ENCODE measurements at regions of chr5 and their contacts with region 1.

Region 1: DNA sequence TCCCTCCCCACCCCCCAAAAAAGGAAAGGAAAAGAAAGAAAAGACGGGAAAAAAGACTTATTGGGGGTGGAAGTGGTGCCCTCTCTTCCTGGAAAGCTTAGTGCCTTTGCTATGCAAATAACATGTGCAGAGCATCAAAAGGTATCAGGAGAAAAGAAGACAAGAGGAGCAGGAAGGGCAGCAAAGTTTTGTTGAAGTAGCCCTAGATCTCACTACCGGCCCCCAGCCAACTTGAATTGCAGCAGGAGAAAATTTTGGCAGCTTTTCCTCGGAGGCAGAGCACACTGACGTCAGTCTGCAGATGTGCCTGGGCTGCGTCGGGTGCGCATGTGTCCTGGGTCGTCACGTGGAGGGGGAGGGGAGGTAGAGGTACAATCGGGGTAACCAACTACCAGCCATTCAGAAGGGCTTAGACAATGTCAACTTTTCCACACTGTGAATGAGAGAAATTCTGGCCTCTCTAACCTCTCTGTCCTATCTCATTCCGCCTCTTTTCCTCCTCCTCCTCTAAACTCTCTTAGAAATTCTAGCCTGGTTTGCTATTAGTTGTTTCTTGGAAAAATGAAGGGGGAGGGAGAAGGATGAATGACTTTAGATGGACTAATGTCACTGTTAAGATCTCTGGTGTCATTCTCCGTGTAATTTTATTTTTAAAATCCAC is at the start of gene ADAMTS6:
- DNase-seq: peak; percentile 84
- H3K4me3 Mint-ChIP-seq: no peak within 1 kb of the TSS
- H3K27ac Mint-ChIP-seq: peak within 1 kb of the TSS; percentile 50
- H3K4me1 Mint-ChIP-seq: peaks cover 8% of the 10 kb centered on the region
- H3K27me3 Mint-ChIP-seq: peaks cover 2% of the 10 kb centered on the region
- total RNA-seq, gene ADAMTS6: 0.44 to 0.45 TPM

Region 2: DNA sequence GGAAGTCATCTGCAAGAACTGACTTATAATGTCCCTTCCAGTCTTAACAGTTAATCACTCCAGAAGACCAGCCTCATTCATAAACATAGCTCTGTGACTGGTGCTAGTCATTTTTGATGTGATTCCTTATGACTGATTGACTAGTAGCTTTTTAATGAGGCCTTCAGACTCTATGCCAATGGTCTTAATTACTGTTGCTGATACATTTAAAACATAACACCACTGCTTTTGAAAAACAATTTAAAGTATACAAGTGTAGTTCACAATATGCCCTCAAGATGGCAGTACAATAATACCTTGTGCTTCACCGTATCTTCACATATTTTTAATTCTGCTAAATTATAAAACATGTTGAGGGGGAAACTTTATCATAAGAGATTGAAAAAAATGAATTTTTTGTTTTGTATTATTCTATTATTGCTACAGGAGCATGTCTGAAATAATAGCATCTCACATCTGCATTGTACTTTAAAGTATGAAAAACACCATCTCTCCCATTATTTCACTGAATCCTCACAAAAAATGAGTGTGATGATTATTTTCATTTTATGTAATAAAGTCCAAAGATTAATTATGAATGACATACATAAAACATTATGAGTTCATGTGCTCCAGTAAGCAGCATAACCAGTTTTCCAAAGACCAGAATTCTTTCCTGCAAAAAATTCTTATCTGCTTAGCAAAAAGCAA is 846.6 kb before region 1 on chr5:
- CTCF ChIA-PET with region 1: interaction called, 8 read pairs
- POLR2A ChIA-PET with region 1: no interaction called
- intact Hi-C with region 1: loop called (anchors 1 kb)
- DNase-seq: no peak
- H3K4me3 Mint-ChIP-seq: no peak overlapping the region
- H3K27ac Mint-ChIP-seq: no peak overlapping the region
- H3K4me1 Mint-ChIP-seq: no peaks in the 10 kb centered on the region
- H3K27me3 Mint-ChIP-seq: peaks cover 16% of the 10 kb centered on the region

Region 3: DNA sequence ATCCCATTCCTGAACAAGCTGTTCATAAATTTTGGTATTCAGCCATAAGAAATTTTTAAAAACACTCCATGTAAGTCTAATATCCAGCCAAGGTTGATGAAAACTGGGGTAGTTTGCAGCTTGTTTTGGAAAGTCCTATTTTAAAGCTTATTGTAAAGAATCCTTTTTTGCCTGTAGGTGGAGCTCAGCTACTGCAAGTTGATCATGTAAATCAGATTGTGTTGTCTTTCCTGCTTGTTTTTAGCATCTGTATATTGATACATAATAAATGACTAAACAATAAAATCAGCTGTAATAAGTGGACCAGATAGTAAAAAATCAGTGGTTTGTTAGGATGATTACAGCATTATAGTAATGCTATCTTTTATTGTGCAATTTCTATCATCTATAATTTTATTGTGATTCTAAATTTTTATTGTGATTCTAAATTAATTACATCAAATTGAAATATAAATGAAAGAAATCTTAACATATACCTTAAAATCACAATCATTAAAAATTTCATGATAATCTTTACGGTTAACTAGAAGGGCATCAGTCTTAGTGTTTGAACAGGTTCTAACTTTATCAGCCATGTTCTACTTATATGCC is 670.6 kb before region 1 on chr5:
- CTCF ChIA-PET with region 1: interaction called, 71 read pairs
- POLR2A ChIA-PET with region 1: no interaction called
- intact Hi-C with region 1: loop called (anchors 1 kb)
- DNase-seq: no peak
- H3K4me3 Mint-ChIP-seq: no peak overlapping the region
- H3K27ac Mint-ChIP-seq: no peak overlapping the region
- H3K4me1 Mint-ChIP-seq: peaks cover 6% of the 10 kb centered on the region
- H3K27me3 Mint-ChIP-seq: no peaks in the 10 kb centered on the region

Region 4: GRCh38 chr5:65035211-65036206 is 446.3 kb before region 1 on chr5:
- CTCF ChIA-PET with region 1: interaction called, 4 read pairs
- POLR2A ChIA-PET with region 1: interaction called, 3 read pairs
- intact Hi-C with region 1: loop called (anchors 2 kb)
- DNase-seq: peak; percentile 87
- H3K4me3 Mint-ChIP-seq: peak overlapping the region; percentile 72
- H3K27ac Mint-ChIP-seq: peak overlapping the region; percentile 89
- H3K4me1 Mint-ChIP-seq: peaks cover 31% of the 10 kb centered on the region
- H3K27me3 Mint-ChIP-seq: no peaks in the 10 kb centered on the region

Region 5: GRCh38 chr5:65102828-65103711 is 378.7 kb before region 1 on chr5:
- CTCF ChIA-PET with region 1: interaction called, 23 read pairs
- POLR2A ChIA-PET with region 1: no interaction called
- intact Hi-C with region 1: loop called (anchors 1 kb)
- DNase-seq: peak; percentile 45
- H3K4me3 Mint-ChIP-seq: peak overlapping the region; percentile 70
- H3K27ac Mint-ChIP-seq: peak overlapping the region; percentile 62
- H3K4me1 Mint-ChIP-seq: peaks cover 31% of the 10 kb centered on the region
- H3K27me3 Mint-ChIP-seq: no peaks in the 10 kb centered on the region

Region 6: GRCh38 chr5:65190328-65191053 is 291.3 kb before region 1 on chr5:
- CTCF ChIA-PET with region 1: no interaction called
- POLR2A ChIA-PET with region 1: no interaction called
- intact Hi-C with region 1: loop called (anchors 2 kb)
- DNase-seq: no peak
- H3K4me3 Mint-ChIP-seq: no peak overlapping the region
- H3K27ac Mint-ChIP-seq: no peak overlapping the region
- H3K4me1 Mint-ChIP-seq: peaks cover 15% of the 10 kb centered on the region
- H3K27me3 Mint-ChIP-seq: peaks cover 5% of the 10 kb centered on the region

Region 7: GRCh38 chr5:65721720-65722574 is 240.2 kb after region 1 on chr5 and contains the starts of genes NLN and SGTB:
- CTCF ChIA-PET with region 1: no interaction called
- POLR2A ChIA-PET with region 1: no interaction called
- intact Hi-C with region 1: loop called (anchors 1 kb)
- DNase-seq: peak; percentile 88
- H3K4me3 Mint-ChIP-seq: peak within 1 kb of the TSS; percentile 89
- H3K27ac Mint-ChIP-seq: peak within 1 kb of the TSS; percentile 91
- H3K4me1 Mint-ChIP-seq: peaks cover 25% of the 10 kb centered on the region
- H3K27me3 Mint-ChIP-seq: no peaks in the 10 kb centered on the region
- total RNA-seq, gene NLN: 22.7 to 23.7 TPM
- total RNA-seq, gene SGTB: 16.5 to 16.7 TPM

Measured in activated CD4-positive, alpha-beta memory T cell treated with anti-CD3 and anti-CD28 coated beads for 36 hours (primary cell).